Activated CD4-positive, alpha-beta T cell treated with anti-CD3 and anti-CD28 coated beads, Interleukin-2, amount 10 ng/mL, durations not matched to agents 24 days and 14 days (primary cell): ENCODE measurements at regions of chr6 and their contacts with region 1.

Region 1: GRCh38 chr6:63571881-63572732 is at the starts of genes LOC128125822 and PTP4A1:
- DNase-seq: peak; percentile 99
- H3K4me3 Mint-ChIP-seq: peak within 1 kb of the TSS; percentile 98
- H3K27ac Mint-ChIP-seq: peak within 1 kb of the TSS; percentile 96
- H3K4me1 Mint-ChIP-seq: peaks cover 27% of the 10 kb centered on the region
- H3K27me3 Mint-ChIP-seq: no peaks in the 10 kb centered on the region
- total RNA-seq, gene PTP4A1: 71.3 and 71.9 TPM in 2 replicates

Region 2: DNA sequence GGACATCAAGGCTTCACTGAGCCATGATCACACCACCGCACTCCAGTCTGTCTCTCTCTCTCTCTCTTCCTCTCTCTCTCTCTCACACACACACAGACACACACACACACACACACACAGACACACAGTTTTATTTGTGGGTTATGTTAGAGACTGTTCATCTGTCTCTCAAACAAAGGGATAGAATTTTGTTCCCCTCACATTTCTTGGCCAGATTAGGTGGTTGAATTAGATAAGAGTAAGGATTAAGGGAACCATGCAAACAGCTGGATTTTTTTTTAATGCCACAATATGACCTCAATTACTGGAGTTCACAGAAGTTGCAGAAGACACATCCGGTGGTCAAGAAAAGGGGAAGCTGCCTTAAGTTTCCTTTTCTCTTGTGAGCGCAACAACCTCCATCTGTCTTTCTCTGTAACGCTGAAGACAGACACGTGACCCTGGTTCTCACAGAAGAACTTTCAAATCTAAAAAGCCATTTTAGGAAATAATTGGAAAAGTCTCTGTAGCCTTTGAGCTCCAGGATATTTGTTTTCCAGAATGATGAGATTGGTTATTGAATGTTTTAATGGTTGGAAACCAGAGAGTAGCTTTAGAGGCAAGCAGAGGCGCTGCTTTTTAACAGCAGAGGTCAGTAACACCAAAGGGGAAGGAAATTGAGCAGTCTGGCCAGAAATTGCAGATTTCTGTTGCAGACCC is 219.4 kb before region 1 on chr6:
- intact Hi-C with region 1: loop called (anchors 1 kb)
- DNase-seq: peak; percentile 64
- H3K4me3 Mint-ChIP-seq: peak overlapping the region; percentile 47
- H3K27ac Mint-ChIP-seq: peak overlapping the region; percentile 26
- H3K4me1 Mint-ChIP-seq: peaks cover 12% of the 10 kb centered on the region
- H3K27me3 Mint-ChIP-seq: peaks cover 3% of the 10 kb centered on the region

Region 3: DNA sequence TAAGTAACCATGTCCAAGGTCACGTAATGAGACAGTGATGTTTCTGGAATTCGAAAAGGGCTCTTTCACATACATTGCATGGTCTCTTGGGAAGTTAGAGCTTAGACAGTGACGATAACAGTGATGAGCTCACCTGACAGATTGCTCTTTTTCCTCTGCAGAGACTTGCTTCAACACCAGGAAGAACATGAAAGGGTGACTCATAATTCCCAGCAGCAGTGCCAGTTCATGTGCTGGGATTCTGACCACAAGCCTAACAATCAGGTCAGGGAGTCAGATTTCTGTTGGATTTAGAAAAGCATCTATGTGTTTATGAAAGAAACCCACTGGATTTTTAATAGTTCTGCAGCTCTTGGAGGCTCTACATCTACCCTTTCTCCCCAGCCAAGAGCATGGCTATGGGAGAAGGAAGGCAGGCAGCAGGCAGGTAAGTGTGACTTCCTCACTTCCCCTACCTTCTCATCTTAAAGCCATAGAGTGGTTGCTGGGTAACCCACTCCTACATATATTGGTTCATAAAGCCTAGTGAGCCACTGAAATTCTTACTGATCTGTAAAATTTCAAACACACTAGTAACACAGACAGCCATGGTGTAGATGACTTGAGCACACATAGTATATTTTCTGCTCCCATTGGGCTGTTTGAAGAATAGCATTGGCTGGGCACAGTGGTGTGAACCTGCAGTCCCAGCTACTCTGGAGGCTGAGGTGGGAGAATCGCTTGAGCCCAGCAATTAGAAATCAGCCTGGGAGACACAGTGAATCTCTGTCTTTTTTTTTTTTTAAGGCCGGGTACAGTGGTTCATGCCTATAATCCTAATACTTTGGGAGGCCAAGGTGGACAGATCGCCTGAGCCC is 44.2 kb before region 1 on chr6:
- intact Hi-C with region 1: loop called (anchors 2 kb)
- DNase-seq: no peak
- H3K4me3 Mint-ChIP-seq: peak overlapping the region; percentile 23
- H3K27ac Mint-ChIP-seq: peak overlapping the region; percentile 51
- H3K4me1 Mint-ChIP-seq: peaks cover 35% of the 10 kb centered on the region
- H3K27me3 Mint-ChIP-seq: no peaks in the 10 kb centered on the region

Region 4: GRCh38 chr6:63635588-63636517 is 63.7 kb after region 1 on chr6 and contains the start of gene PHF3:
- intact Hi-C with region 1: loop called (anchors 1 kb)
- DNase-seq: peak; percentile 97
- H3K4me3 Mint-ChIP-seq: peak within 1 kb of the TSS; percentile 100
- H3K27ac Mint-ChIP-seq: peak within 1 kb of the TSS; percentile 100
- H3K4me1 Mint-ChIP-seq: peaks cover 33% of the 10 kb centered on the region
- H3K27me3 Mint-ChIP-seq: peaks cover 7% of the 10 kb centered on the region
- total RNA-seq, gene PHF3: 39.1 and 39.2 TPM in 2 replicates

Region 5: DNA sequence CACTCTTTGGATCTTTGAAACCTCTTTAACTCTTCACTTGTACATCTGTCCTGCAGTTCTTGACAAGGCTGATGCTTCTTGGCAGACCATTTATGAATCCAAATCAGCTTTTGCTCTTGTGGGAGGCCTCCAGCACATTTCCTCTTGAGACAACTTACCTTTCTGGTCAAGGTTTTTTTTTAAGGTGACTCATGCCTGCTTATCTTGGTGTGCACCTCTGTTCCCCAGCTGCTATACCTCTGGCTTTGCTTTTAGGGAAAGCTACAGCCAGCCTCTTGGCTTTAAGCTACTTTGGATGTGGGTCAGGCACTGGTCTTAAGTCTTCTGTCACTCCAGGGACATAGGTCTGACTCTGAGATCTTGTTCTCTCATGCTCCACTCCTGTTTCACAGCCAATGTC is 170.0 kb after region 1 on chr6:
- intact Hi-C with region 1: no loop called
- DNase-seq: no peak
- H3K4me3 Mint-ChIP-seq: no peak overlapping the region
- H3K27ac Mint-ChIP-seq: no peak overlapping the region
- H3K4me1 Mint-ChIP-seq: no peaks in the 10 kb centered on the region
- H3K27me3 Mint-ChIP-seq: peaks cover 2% of the 10 kb centered on the region

Region 6: GRCh38 chr6:63764318-63764916 is 192.3 kb after region 1 on chr6:
- intact Hi-C with region 1: loop called (anchors 1 kb)
- DNase-seq: peak; percentile 63
- H3K4me3 Mint-ChIP-seq: no peak overlapping the region
- H3K27ac Mint-ChIP-seq: no peak overlapping the region
- H3K4me1 Mint-ChIP-seq: no peaks in the 10 kb centered on the region
- H3K27me3 Mint-ChIP-seq: peaks cover 14% of the 10 kb centered on the region